ENCODE measurements at regions of chr19 and their contacts with region 1.

Region 1: GRCh38 chr19:19525611-19526380 is 2.9 kb upstream of the YJEFN3 start:
- DNase-seq: no peak
- H3K4me3 ChIP-seq: no peak overlapping the region
- H3K27ac ChIP-seq: no peak overlapping the region
- H3K4me1 ChIP-seq: peaks cover 0 to 3% (median 3%) of the 10 kb centered on the region in 4 experiments; a peak in 3 of 7 replicates
- H3K27me3 ChIP-seq: no peaks in the 10 kb centered on the region
- CTCF ChIP-seq: peak in 1 of 3 experiments; percentile 14; a peak in 1 of 4 replicates
- EP300 ChIP-seq: no peak
- POLR2A ChIP-seq: no peak
- RAD21 ChIP-seq: no peak

Region 2: DNA sequence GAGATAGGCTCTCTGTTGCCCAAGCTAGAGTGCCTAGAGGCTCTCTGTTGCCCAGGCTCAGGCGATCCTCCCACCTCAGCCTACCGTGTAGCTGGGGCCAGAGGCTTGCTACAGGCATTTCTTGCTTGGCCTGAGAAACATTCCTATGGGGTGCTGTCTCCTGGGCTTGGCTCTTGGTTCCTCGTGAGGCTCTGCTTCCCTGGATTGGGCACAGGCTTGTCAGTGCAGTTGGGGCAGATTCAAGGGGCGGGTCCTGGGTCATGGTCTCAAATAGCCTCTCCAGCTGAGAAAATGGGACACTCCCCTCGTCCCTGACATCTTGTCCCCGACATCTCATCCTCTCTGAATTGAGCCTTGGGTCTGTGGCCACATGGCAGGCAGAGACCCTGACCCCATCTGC is 15.4 kb before region 1 on chr19:
- CTCF ChIA-PET with region 1: interaction called, 9 read pairs
- POLR2A ChIA-PET with region 1: interaction called, 34 read pairs
- DNase-seq: no peak
- H3K4me3 ChIP-seq: no peak overlapping the region
- H3K27ac ChIP-seq: no peak overlapping the region
- H3K4me1 ChIP-seq: no peaks in the 10 kb centered on the region; a peak in 1 of 7 replicates
- H3K27me3 ChIP-seq: no peaks in the 10 kb centered on the region; a peak in 1 of 7 replicates
- CTCF ChIP-seq: no peak
- EP300 ChIP-seq: no peak
- POLR2A ChIP-seq: no peak; a peak in 1 of 3 replicates
- RAD21 ChIP-seq: no peak

Measured in H1 (cell line).